Activated naive CD4-positive, alpha-beta T cell treated with anti-CD3 and anti-CD28 coated beads, Interleukin-2, amount 10 ng/mL, durations not matched to agents 7 days and 5 days (primary cell): ENCODE measurements at regions of chr11 and their contacts with region 1.

Region 1: DNA sequence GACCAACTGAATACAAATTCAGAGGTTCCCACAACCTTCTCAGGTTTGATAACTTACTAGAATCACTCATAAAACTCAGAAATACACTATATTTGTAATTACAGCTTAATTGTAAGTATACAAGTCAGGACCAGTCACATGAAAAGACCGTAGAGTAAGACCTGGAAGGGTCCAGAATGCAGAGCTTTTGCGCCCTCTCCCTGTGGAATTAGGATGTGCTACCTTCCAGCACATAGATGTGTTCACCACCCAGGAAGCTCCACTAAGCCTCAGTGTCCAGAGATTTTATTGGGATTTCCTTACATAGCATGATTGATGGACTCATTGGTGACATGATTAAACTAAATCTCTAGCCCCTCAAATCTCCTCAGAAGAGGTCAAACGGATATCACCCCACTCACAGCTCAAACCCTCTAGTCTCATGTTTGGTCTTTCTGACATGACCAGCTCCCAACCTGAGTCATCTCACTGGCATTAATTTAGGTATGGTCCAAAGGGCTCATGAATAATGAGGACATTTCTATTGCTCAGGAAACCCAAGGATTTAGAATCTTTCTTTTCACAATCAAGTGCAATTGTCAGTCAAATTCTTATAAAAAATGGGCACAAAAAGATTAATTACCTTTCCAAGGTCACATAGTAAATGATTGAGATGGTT is 77.2 kb upstream of the UBASH3B start:
- DNase-seq: no peak
- H3K4me3 Mint-ChIP-seq: no peak overlapping the region
- H3K27ac Mint-ChIP-seq: no peak overlapping the region
- H3K4me1 Mint-ChIP-seq: peaks cover 9% of the 10 kb centered on the region
- H3K27me3 Mint-ChIP-seq: no peaks in the 10 kb centered on the region

Region 2: GRCh38 chr11:122538060-122538459 is 40.2 kb before region 1 on chr11:
- CTCF ChIA-PET with region 1: no interaction called
- DNase-seq: no peak
- H3K4me3 Mint-ChIP-seq: no peak overlapping the region
- H3K27ac Mint-ChIP-seq: no peak overlapping the region
- H3K4me1 Mint-ChIP-seq: no peaks in the 10 kb centered on the region
- H3K27me3 Mint-ChIP-seq: peaks cover 6% of the 10 kb centered on the region

Region 3: GRCh38 chr11:122781378-122782195 is 203.3 kb after region 1 on chr11:
- CTCF ChIA-PET with region 1: interaction called, 19 read pairs
- DNase-seq: peak; percentile 80
- H3K4me3 Mint-ChIP-seq: no peak overlapping the region
- H3K27ac Mint-ChIP-seq: no peak overlapping the region
- H3K4me1 Mint-ChIP-seq: peaks cover 3% of the 10 kb centered on the region
- H3K27me3 Mint-ChIP-seq: no peaks in the 10 kb centered on the region